ENCODE measurements at regions of chr1 and their contacts with region 1.

Region 1: GRCh38 chr1:100452641-100453040 is 85.3 kb upstream of the GPR88 start:
- DNase-seq: no peak
- H3K4me3 Mint-ChIP-seq: no peak overlapping the region
- H3K27ac Mint-ChIP-seq: peak overlapping the region; percentile 77
- H3K4me1 Mint-ChIP-seq: peaks cover 81% of the 10 kb centered on the region
- H3K27me3 Mint-ChIP-seq: no peaks in the 10 kb centered on the region

Region 2: GRCh38 chr1:100299521-100300222 is 153.0 kb before region 1 on chr1:
- CTCF ChIA-PET with region 1: interaction called, 21 read pairs
- POLR2A ChIA-PET with region 1: no interaction called
- intact Hi-C with region 1: loop called (anchors 2 kb)
- DNase-seq: peak; percentile 63
- H3K4me3 Mint-ChIP-seq: no peak overlapping the region
- H3K27ac Mint-ChIP-seq: no peak overlapping the region
- H3K4me1 Mint-ChIP-seq: peaks cover 12% of the 10 kb centered on the region
- H3K27me3 Mint-ChIP-seq: no peaks in the 10 kb centered on the region

Region 3: DNA sequence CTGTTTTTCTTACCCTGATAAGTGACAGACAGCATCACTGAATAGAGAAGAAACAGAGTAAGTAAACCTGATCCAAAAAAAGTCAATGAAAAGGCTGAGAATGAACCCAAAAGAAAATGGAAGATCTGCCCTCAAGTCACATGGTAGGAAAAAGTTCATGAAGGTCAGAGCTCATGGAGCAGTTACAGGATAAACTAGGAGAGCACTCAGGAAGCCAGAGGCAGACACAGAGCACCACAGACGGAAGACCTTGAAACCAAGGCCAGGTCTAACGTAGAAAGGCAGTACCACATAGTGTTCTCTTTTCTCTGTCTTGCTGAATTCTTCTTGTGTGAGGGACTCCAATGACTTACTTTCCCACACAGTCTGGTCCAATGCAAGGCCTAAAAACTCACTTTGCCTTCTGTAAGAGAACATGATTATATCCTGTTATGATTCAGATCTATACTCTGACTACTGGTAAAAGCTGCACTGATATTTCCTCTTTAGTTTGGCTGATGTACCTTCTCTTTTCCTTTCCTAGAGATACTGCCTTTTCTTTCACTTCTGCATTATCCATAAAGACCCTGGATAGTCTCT is 145.8 kb before region 1 on chr1:
- CTCF ChIA-PET with region 1: interaction called, 21 read pairs
- POLR2A ChIA-PET with region 1: no interaction called
- intact Hi-C with region 1: loop called (anchors 2 kb)
- DNase-seq: no peak
- H3K4me3 Mint-ChIP-seq: no peak overlapping the region
- H3K27ac Mint-ChIP-seq: no peak overlapping the region
- H3K4me1 Mint-ChIP-seq: peaks cover 20% of the 10 kb centered on the region
- H3K27me3 Mint-ChIP-seq: no peaks in the 10 kb centered on the region

Region 4: GRCh38 chr1:100400404-100400803 is 52.2 kb before region 1 on chr1:
- CTCF ChIA-PET with region 1: interaction called, 14 read pairs
- POLR2A ChIA-PET with region 1: interaction called, 3 read pairs
- intact Hi-C with region 1: loop called (anchors 1 kb)
- DNase-seq: peak; percentile 67
- H3K4me3 Mint-ChIP-seq: peak overlapping the region; percentile 53
- H3K27ac Mint-ChIP-seq: peak overlapping the region; percentile 91
- H3K4me1 Mint-ChIP-seq: peaks cover 83% of the 10 kb centered on the region
- H3K27me3 Mint-ChIP-seq: no peaks in the 10 kb centered on the region